ENCODE measurements at regions of chr18 and their contacts with region 1.

Region 1: DNA sequence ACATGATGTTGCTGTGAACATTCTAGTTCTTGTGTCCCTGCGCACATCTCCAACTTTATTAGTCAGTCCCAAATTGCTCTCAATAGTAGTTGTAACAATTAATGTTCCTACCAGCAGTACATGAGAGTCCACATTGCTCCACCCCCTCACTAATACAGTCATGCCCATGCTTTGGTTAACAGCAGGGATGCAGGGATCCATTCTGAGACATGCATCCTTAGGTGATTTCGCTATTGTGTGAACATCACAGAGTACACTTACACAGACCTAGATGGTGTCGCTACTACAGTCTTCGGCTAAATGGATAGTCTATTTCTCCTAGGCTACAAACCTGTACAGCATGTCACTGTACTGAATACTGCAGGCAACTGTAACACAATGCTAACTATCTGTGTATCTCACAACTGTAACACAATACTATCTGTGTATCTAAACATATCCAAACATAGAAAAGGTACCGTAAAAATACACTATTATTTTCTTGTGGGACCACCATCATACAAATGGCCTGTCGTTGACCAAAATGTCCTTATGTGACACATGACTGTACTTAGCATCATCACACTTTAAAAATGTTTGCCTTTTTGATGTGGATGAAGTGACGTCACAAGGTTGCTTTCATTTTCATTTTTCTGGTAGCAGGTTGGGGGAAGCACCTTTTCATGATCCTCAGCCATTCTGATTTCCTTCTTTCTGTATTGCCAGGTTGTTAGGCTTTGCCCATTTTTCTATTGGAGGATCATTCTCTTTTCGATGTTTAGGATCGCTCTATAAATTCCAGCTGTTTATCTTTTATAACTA is 82.9 kb upstream of the RNF152 start:
- DNase-seq: no peak
- H3K4me3 ChIP-seq: no peak overlapping the region
- H3K27ac ChIP-seq: no peak overlapping the region
- H3K4me1 ChIP-seq: no peaks in the 10 kb centered on the region
- H3K27me3 ChIP-seq: no peaks in the 10 kb centered on the region
- CTCF ChIP-seq: no peak

Region 2: DNA sequence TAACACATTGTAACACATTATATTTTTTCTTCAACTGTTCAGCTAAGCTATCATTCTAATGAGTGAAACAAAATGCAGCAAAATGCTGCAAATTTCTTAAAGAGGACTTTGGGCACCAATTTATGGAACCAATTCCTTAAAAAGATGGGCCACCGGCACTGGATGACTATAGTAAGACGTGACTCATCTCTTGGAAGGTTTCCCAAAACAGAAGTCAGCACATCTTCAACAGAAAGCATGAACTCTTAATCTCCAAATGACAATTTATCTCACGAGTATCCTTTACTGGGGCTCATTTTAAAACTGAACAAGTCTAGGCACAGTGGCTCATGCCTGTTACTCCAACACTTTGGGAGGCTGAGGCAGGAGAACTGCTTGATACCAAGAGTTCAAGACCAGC is 429.1 kb before region 1 on chr18:
- intact Hi-C with region 1: no loop called
- DNase-seq: no peak
- H3K4me3 ChIP-seq: no peak overlapping the region
- H3K27ac ChIP-seq: no peak overlapping the region
- H3K4me1 ChIP-seq: no peaks in the 10 kb centered on the region
- H3K27me3 ChIP-seq: no peaks in the 10 kb centered on the region
- CTCF ChIP-seq: no peak

Region 3: DNA sequence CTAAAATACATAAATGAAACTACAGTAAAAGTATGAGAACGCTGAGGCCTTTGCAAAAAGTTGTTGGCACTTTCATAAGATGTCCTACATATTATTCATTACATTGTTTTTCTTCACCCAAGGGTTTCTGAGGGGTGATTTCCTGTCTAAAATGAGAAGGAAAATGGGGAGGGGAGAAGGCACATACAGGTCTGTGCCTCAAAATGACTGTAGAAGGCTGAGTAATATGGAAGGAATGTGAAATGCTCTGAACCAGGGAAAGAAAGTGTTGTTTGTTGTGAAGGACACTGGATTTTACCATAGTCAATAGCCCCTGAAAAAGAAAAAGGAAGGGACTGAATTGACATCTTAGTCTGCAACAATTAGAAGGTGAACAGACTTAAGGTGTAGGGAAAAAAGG is 16.6 kb after region 1 on chr18:
- intact Hi-C with region 1: loop called (anchors 1 kb)
- DNase-seq: no peak
- H3K4me3 ChIP-seq: no peak overlapping the region
- H3K27ac ChIP-seq: peak overlapping the region; percentile 60 to 67
- H3K4me1 ChIP-seq: peaks cover 8 to 25% of the 10 kb centered on the region in 2 donors
- H3K27me3 ChIP-seq: no peaks in the 10 kb centered on the region
- CTCF ChIP-seq: no peak

Region 4: DNA sequence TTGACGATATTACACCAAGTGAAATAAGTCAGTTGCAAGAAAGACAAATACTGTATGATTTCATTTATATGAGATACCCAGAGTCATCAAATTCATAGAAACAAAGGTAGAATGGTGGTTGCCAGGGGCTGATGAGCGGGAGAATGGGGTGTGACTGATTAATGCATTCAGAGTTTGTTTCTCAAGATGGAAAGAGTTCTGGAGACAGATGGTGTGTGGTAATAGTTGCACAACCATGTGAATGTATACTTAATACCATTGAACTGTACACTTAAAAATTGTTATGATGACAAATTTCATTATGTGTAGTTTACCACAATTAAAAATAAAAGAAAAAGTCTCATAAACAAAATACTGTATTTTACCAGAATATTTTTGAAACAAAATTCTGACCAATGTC is 93.8 kb after region 1 on chr18:
- intact Hi-C with region 1: no loop called
- DNase-seq: no peak
- H3K4me3 ChIP-seq: no peak overlapping the region
- H3K27ac ChIP-seq: no peak overlapping the region
- H3K4me1 ChIP-seq: no peaks in the 10 kb centered on the region
- H3K27me3 ChIP-seq: no peaks in the 10 kb centered on the region
- CTCF ChIP-seq: no peak

Region 5: GRCh38 chr18:62088156-62088555 is 112.4 kb after region 1 on chr18:
- intact Hi-C with region 1: no loop called
- DNase-seq: no peak
- H3K4me3 ChIP-seq: no peak overlapping the region
- H3K27ac ChIP-seq: no peak overlapping the region
- H3K4me1 ChIP-seq: no peaks in the 10 kb centered on the region
- H3K27me3 ChIP-seq: no peaks in the 10 kb centered on the region
- CTCF ChIP-seq: no peak